ENCODE measurements at regions of chr17 and their contacts with region 1.

Region 1: DNA sequence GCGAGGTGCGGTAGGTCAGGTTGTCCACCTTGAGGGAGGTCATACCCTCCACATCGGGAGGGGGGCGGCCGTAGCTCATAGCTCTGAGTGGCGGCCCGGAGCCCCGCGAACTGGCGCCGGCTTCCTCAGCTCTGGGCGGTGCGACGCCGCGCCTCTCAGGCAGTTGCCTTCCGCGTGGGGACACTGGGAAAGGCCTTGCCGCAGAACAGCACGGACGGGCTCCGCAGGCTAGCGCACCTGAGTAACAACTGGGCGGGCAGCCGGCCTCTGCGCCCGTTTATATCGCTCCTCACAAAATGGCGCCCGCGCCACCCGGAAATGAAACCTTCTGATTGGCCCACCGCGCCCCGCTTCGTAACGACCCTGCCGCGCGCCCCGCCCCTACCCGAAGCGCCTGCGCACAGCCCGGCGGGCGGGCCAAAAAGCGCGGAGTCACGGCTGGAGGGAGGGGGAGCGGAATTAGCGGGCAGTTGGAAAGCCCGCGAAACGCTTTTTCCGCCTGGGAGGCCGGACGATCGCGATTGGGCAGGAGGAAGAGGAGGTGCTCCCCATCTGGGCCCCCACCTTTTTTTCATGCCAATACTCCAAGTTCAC is at the start of gene SRSF2:
- DNase-seq: peak; percentile 95 to 99 (median 98)
- ATAC-seq: peak; percentile 64
- H3K4me3 ChIP-seq: peak within 1 kb of the TSS; percentile 96
- H3K4me3 Mint-ChIP-seq: peak within 1 kb of the TSS; percentile 96
- H3K27ac ChIP-seq: peak within 1 kb of the TSS; percentile 99
- H3K27ac Mint-ChIP-seq: peak within 1 kb of the TSS; percentile 96
- H3K4me1 ChIP-seq: peaks cover 37% of the 10 kb centered on the region
- H3K4me1 Mint-ChIP-seq: peaks cover 60% of the 10 kb centered on the region
- H3K27me3 ChIP-seq: no peaks in the 10 kb centered on the region
- H3K27me3 Mint-ChIP-seq: no peaks in the 10 kb centered on the region
- CTCF ChIP-seq: no peak
- total RNA-seq, gene SRSF2: 448 to 460 TPM

Region 2: DNA sequence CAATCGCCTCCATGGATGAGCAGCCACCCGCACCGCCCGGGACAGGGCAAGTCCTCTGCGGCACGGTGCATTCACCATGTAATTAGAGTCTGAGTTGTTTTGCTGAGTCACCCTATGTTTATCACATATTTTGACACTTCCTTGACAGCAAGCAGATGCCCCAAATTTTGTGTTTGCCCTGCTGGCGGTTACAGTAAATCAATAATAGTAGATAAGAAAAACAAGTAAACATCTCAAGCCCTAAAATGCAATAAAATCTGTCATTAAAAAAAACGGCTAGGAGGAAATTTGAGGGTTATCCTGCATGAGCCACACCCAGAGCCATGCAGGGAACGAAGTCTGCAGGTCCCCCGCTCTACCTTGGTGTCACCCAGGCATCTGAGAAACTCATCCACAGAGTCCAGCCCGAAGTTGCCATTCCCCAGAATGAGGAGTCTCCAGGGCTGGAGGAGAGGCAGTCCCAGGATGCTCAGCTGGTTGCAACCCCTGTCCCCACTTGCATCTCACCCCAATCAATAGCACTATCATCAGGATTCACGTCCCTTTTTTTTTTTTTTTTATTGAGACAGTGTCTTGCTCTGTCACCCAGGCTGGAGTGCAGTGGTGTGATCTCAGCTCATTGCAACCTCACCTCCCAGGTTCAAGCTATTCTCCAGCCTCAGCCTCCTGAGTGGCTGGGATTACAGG is 77.1 kb before region 1 on chr17:
- CTCF ChIA-PET with region 1: no interaction called
- POLR2A ChIA-PET with region 1: no interaction called
- intact Hi-C with region 1: no loop called
- DNase-seq: peak in 8 of 14 experiments; percentile 6 to 61 (median 42)
- ATAC-seq: peak; percentile 79
- H3K4me3 ChIP-seq: no peak overlapping the region
- H3K4me3 Mint-ChIP-seq: peak overlapping the region; percentile 18
- H3K27ac ChIP-seq: no peak overlapping the region
- H3K27ac Mint-ChIP-seq: peak overlapping the region; percentile 69
- H3K4me1 ChIP-seq: peaks cover 37% of the 10 kb centered on the region
- H3K4me1 Mint-ChIP-seq: peaks cover 36% of the 10 kb centered on the region
- H3K27me3 ChIP-seq: no peaks in the 10 kb centered on the region
- H3K27me3 Mint-ChIP-seq: no peaks in the 10 kb centered on the region
- CTCF ChIP-seq: no peak

Region 3: DNA sequence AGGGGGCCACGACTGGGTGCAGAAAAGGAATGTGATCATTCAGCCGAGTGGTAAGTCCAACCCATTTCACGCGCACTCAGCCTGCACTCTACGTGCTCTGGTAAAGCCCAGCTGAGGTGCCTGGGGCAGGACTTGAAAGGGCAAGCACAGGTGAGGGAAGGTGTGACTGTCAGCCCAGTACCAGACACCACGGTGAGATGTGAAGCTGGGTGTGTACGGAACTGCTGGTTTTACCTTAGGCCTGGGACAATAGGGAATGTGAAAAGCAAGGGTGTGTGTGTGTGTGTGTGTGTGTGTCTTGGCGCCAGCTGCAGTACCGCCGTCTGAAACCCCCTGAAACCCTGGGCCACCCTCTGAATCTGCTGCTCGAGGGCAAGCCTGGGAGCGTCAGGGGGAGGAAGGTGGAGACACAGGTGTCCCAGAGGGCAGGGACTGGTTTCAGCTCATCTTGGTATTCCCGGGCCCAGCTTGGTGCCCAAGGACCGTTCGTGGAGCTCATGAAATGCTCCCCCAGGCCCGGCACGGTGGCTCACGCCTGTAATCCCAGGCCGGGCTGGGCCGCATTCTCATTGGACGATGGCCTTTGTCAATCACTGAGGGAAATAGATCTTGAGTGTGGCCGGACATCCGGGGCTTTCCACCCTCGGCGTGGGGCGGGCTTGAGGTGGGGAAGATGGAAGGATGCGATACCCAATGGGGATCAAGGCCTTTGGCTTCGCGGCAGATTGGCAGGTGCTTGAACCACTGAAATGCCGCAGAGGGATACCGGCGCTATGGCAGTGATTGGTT is 65.9 kb before region 1 on chr17:
- CTCF ChIA-PET with region 1: no interaction called
- POLR2A ChIA-PET with region 1: interaction called, 19 read pairs
- intact Hi-C with region 1: no loop called
- DNase-seq: peak; percentile 95 to 100 (median 98)
- ATAC-seq: peak; percentile 98
- H3K4me3 ChIP-seq: peak overlapping the region; percentile 69
- H3K4me3 Mint-ChIP-seq: peak overlapping the region; percentile 88
- H3K27ac ChIP-seq: peak overlapping the region; percentile 72 to 81
- H3K27ac Mint-ChIP-seq: peak overlapping the region; percentile 93
- H3K4me1 ChIP-seq: peaks cover 30% of the 10 kb centered on the region
- H3K4me1 Mint-ChIP-seq: peaks cover 35% of the 10 kb centered on the region
- H3K27me3 ChIP-seq: no peaks in the 10 kb centered on the region
- H3K27me3 Mint-ChIP-seq: no peaks in the 10 kb centered on the region
- CTCF ChIP-seq: no peak

Region 4: GRCh38 chr17:76747716-76748363 is 10.7 kb after region 1 on chr17:
- CTCF ChIA-PET with region 1: interaction called, 10 read pairs
- POLR2A ChIA-PET with region 1: interaction called, 76 read pairs
- intact Hi-C with region 1: loop called (anchors 1 to 2 kb)
- DNase-seq: no peak
- ATAC-seq: no peak
- H3K4me3 ChIP-seq: no peak overlapping the region
- H3K4me3 Mint-ChIP-seq: no peak overlapping the region
- H3K27ac ChIP-seq: no peak overlapping the region
- H3K27ac Mint-ChIP-seq: no peak overlapping the region
- H3K4me1 ChIP-seq: peaks cover 15% of the 10 kb centered on the region
- H3K4me1 Mint-ChIP-seq: peaks cover 10% of the 10 kb centered on the region
- H3K27me3 ChIP-seq: no peaks in the 10 kb centered on the region
- H3K27me3 Mint-ChIP-seq: no peaks in the 10 kb centered on the region
- CTCF ChIP-seq: no peak

Region 5: GRCh38 chr17:76772842-76773525 is 35.8 kb after region 1 on chr17:
- CTCF ChIA-PET with region 1: interaction called, 6 read pairs
- POLR2A ChIA-PET with region 1: interaction called, 6 read pairs
- intact Hi-C with region 1: loop called in 1 of 2 experiments (anchors 5 kb)
- DNase-seq: peak in 13 of 14 experiments; percentile 16 to 87 (median 48)
- ATAC-seq: peak; percentile 95
- H3K4me3 ChIP-seq: peak overlapping the region; percentile 30
- H3K4me3 Mint-ChIP-seq: peak overlapping the region; percentile 36
- H3K27ac ChIP-seq: peak overlapping the region; percentile 37 to 75
- H3K27ac Mint-ChIP-seq: peak overlapping the region; percentile 93
- H3K4me1 ChIP-seq: peaks cover 22% of the 10 kb centered on the region
- H3K4me1 Mint-ChIP-seq: peaks cover 23% of the 10 kb centered on the region
- H3K27me3 ChIP-seq: no peaks in the 10 kb centered on the region
- H3K27me3 Mint-ChIP-seq: no peaks in the 10 kb centered on the region
- CTCF ChIP-seq: no peak

Region 6: GRCh38 chr17:76872221-76872873 is 135.2 kb after region 1 on chr17:
- CTCF ChIA-PET with region 1: no interaction called
- POLR2A ChIA-PET with region 1: no interaction called
- intact Hi-C with region 1: no loop called
- DNase-seq: peak in 7 of 14 experiments; percentile 4 to 37 (median 14)
- ATAC-seq: peak; percentile 35
- H3K4me3 ChIP-seq: no peak overlapping the region
- H3K4me3 Mint-ChIP-seq: peak overlapping the region; percentile 60
- H3K27ac ChIP-seq: no peak overlapping the region
- H3K27ac Mint-ChIP-seq: no peak overlapping the region
- H3K4me1 ChIP-seq: peaks cover 13% of the 10 kb centered on the region
- H3K4me1 Mint-ChIP-seq: peaks cover 13% of the 10 kb centered on the region
- H3K27me3 ChIP-seq: peaks cover 23 to 31% of the 10 kb centered on the region in 2 experiments
- H3K27me3 Mint-ChIP-seq: peaks cover 24% of the 10 kb centered on the region
- CTCF ChIP-seq: no peak